Dendritic cell treated with granulocyte-macrophage colony-stimulating factor and Interleukin-4, amounts not matched to agents 40 ng/mL and 50 ng/mL, for 4 days (primary cell): ENCODE measurements at regions of chr2 and their contacts with region 1.

Region 1: GRCh38 chr2:43995733-43996533 is at the start of gene LRPPRC:
- H3K4me3 Mint-ChIP-seq: peak within 1 kb of the TSS; percentile 91
- H3K27ac Mint-ChIP-seq: peak within 1 kb of the TSS; percentile 98
- H3K4me1 Mint-ChIP-seq: peaks cover 34% of the 10 kb centered on the region
- H3K27me3 Mint-ChIP-seq: peaks cover 1% of the 10 kb centered on the region

Region 2: GRCh38 chr2:43773876-43774613 is 221.9 kb before region 1 on chr2 and contains the start of gene DYNC2LI1:
- intact Hi-C with region 1: loop called (anchors 5 kb)
- H3K4me3 Mint-ChIP-seq: peak within 1 kb of the TSS; percentile 98
- H3K27ac Mint-ChIP-seq: peak within 1 kb of the TSS; percentile 95
- H3K4me1 Mint-ChIP-seq: peaks cover 12% of the 10 kb centered on the region
- H3K27me3 Mint-ChIP-seq: peaks cover 3% of the 10 kb centered on the region

Region 3: GRCh38 chr2:44055229-44055628 is 59.3 kb after region 1 on chr2:
- intact Hi-C with region 1: no loop called
- H3K4me3 Mint-ChIP-seq: no peak overlapping the region
- H3K27ac Mint-ChIP-seq: no peak overlapping the region
- H3K4me1 Mint-ChIP-seq: no peaks in the 10 kb centered on the region
- H3K27me3 Mint-ChIP-seq: no peaks in the 10 kb centered on the region

Region 4: DNA sequence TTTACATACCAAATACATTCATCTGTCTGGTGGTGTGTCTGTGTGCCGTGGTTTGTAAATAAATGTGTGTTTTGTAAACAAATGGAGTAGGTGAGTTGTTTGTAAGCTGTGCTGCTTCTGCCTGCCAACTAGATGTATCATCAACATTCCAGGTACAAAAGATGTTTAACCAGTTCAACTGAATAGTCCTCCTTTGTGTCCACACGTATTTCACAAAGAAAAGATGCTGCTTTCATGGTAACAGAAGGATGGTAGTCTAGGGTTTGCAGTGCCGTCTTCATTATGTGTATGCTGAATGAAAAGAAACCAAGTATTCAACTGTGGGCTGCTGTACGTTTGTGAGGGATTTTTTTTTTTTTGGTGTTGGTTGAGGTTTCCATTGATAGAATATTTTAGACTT is 437.9 kb after region 1 on chr2:
- intact Hi-C with region 1: no loop called
- H3K4me3 Mint-ChIP-seq: no peak overlapping the region
- H3K27ac Mint-ChIP-seq: no peak overlapping the region
- H3K4me1 Mint-ChIP-seq: peaks cover 6% of the 10 kb centered on the region
- H3K27me3 Mint-ChIP-seq: no peaks in the 10 kb centered on the region